ENCODE measurements at regions of chr1 and their contacts with region 1.

Region 1: DNA sequence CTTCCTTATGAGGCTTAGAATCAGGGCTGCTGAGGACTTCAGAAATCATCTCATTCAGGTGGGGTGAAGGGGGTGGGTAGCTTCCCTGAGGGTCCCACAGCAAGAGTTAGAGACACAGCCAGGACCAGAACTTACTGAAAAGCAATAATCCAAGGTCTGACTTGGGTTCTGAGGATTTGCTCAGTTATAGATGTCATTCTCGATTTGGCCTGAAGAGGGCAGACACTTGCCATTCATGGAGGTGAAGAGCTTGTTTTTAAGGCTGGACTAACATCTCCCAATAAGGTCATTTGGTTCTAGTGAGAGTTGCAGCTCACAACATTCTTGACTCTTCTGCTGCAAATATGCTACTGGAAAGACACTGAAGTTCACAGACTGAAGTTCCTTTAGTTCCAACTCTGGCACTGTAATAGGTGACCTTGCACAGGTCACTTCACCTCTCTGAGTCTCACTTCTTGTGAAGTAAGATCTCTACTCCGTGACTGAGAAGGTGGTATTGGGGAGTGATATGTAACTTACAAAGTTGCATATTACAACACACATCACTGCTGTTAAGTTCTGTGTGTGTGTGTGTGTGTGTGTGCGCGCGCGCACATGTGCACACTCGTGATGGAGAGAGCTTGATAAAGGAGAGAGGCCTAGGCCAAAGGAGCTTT is 69.8 kb upstream of the DIRAS3 start:
- DNase-seq: peak in 2 of 6 donors; percentile 40 to 56
- ATAC-seq: peak; percentile 80 to 94 (median 87)
- H3K4me3 ChIP-seq: no peak overlapping the region
- H3K27ac ChIP-seq: no peak overlapping the region
- H3K4me1 ChIP-seq: no peaks in the 10 kb centered on the region
- H3K27me3 ChIP-seq: no peaks in the 10 kb centered on the region
- CTCF ChIP-seq: peak; percentile 54 to 80 (median 64)

Region 2: DNA sequence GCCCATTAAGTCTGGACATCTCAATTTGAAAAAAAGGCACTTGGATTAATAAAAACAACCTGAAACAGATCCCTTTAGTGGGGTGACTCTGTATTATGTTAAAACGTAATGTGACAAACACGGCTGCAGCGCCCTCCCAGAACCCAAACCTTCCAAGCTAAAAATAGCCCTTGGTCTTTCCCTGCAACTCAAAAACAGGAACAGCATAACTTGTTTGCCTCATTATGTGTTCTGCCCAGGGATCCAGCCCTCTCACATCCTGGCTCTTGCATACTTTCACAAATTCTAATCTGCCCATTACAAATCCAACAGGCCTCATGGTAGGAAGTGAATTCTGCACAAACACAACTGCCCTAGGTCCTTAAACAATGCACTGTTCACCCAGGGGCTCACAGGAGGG is 529.9 kb before region 1 on chr1:
- intact Hi-C with region 1: no loop called
- DNase-seq: no peak
- ATAC-seq: peak in 2 of 4 donors; percentile 45 to 61
- H3K4me3 ChIP-seq: no peak overlapping the region
- H3K27ac ChIP-seq: no peak overlapping the region
- H3K4me1 ChIP-seq: no peaks in the 10 kb centered on the region
- H3K27me3 ChIP-seq: no peaks in the 10 kb centered on the region
- CTCF ChIP-seq: no peak

Region 3: DNA sequence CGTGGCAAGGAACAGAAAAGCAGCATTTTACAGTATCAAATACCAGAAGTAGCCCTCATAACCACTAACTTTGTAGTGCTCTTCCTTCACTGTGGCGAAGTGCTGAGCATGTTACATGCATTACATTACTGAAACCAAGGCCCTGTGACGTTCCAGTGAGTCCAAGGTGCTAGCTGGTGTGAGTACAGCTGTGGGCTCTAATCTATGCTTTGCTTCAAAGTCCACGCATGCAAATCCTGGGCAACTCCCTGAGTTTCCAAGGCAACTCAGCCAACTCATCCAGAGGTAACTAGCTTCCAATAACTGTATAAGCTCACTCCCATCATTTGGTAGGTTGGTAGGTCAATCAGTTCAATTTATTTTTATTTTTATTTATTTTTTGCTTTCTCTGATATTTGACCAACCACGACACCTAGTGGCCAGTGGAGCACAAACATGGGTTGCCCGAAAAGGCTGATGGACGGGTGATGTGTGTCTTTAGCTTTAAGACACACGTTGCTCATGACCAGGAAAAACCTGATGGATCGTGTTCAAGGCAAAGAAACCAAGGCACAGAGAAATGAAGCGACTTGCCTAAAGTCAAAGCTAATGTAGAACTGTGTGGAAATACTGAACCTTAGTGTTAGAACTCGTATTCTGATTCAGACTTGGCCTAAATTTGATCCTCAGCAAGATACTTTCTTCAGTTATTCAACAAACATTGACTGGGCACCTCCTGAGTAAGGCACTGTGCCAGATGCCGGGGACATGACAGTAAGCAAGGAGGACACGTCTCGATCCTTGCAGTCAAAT is 360.0 kb before region 1 on chr1:
- intact Hi-C with region 1: loop called in 1 of 3 experiments (anchors 10 kb)
- DNase-seq: peak in 4 of 6 donors; percentile 49 to 69 (median 61)
- ATAC-seq: peak; percentile 91 to 95 (median 93)
- H3K4me3 ChIP-seq: no peak overlapping the region
- H3K27ac ChIP-seq: peak overlapping the region; percentile 22 to 49 (median 42)
- H3K4me1 ChIP-seq: peaks cover 4 to 11% (median 6%) of the 10 kb centered on the region in 3 donors
- H3K27me3 ChIP-seq: no peaks in the 10 kb centered on the region
- CTCF ChIP-seq: peak; percentile 65 to 83 (median 74)

Region 4: DNA sequence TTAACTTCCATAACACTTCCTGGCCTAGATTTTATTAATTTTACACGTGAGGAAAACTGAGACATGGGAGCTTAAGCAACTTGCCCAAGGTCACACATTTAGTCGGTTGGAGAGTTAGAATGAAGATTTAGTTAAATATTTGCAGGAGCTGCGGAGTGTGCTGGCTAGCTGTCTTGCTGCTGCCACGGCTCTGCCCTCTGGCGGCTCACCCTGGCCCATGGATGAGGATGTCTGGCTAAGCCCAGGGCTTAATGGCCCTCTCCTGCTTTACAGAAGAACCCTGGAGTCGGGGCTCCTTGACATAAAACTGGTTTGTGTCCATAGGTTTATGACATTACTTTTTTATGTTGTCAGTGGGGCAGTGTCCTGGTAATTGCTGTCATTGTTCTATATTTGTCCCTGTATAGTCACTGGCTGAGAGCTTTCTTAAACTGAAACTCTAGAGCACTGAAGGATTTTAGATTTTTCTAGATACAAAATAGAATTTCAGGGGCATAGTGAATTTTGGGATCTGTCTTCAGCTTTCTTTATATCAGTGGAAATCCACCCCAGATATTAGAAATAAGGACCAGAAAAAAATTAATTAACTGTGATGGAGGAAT is 200.9 kb after region 1 on chr1:
- intact Hi-C with region 1: loop called (anchors 5 to 10 kb)
- DNase-seq: peak; percentile 79 to 90 (median 83)
- ATAC-seq: peak; percentile 99 to 100 (median 100)
- H3K4me3 ChIP-seq: no peak overlapping the region
- H3K27ac ChIP-seq: no peak overlapping the region
- H3K4me1 ChIP-seq: peaks cover 0 to 9% (median 0%) of the 10 kb centered on the region in 3 donors
- H3K27me3 ChIP-seq: no peaks in the 10 kb centered on the region
- CTCF ChIP-seq: peak; percentile 45 to 71 (median 62)

Region 5: DNA sequence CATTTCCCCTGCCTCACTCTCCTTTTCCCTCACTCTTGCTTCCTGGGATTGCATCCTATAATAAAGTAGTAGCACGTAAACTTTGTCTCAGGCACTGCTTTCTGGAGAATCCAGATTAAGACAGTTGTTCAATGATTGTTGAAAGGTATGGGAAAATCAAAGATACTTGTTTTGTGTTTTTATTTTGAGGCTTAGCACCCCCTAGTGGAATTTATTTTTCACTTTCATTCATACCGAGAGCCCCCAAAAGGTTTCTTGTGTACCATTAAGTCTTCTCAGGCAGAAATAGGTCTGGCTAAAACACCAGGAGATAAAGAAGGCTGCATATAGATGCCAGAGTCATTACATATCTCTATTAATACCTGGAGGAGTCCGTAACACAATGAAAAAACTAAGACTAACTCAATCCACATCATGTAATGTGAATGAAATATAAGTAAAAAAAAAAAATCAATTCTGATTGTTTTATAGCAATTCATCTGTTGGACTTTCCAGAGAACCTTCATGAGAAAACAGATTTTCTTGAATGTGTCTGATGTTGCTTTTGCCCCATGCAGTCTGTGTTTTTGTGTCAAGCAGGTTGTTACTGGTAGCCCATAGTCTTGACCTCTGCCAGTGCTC is 226.0 kb after region 1 on chr1:
- intact Hi-C with region 1: loop called in 2 of 3 experiments (anchors 5 kb)
- DNase-seq: no peak
- ATAC-seq: peak in 1 of 4 donors; percentile 30
- H3K4me3 ChIP-seq: no peak overlapping the region
- H3K27ac ChIP-seq: no peak overlapping the region
- H3K4me1 ChIP-seq: no peaks in the 10 kb centered on the region
- H3K27me3 ChIP-seq: no peaks in the 10 kb centered on the region
- CTCF ChIP-seq: peak in 3 of 4 donors; percentile 31 to 37 (median 32)

Measured in pancreas (tissue), 10 donors.